Activated CD8-positive, alpha-beta T cell treated with anti-CD3 and anti-CD28 coated beads, Interleukin-2, amount 10 ng/mL, durations not matched to agents 7 days and 5 days (primary cell): ENCODE measurements at regions of chr1 and their contacts with region 1.

Region 1: GRCh38 chr1:168342572-168343280 is 62.0 kb downstream of the TBX19 start:
- DNase-seq: peak; percentile 92
- ATAC-seq: peak; percentile 98
- H3K4me3 Mint-ChIP-seq: no peak overlapping the region
- H3K27ac Mint-ChIP-seq: peak overlapping the region; percentile 77
- H3K4me1 Mint-ChIP-seq: peaks cover 62% of the 10 kb centered on the region
- H3K27me3 Mint-ChIP-seq: no peaks in the 10 kb centered on the region

Region 2: GRCh38 chr1:168187177-168187576 is 155.5 kb before region 1 on chr1:
- CTCF ChIA-PET with region 1: no interaction called
- POLR2A ChIA-PET with region 1: no interaction called
- DNase-seq: no peak
- ATAC-seq: no peak
- H3K4me3 Mint-ChIP-seq: no peak overlapping the region
- H3K27ac Mint-ChIP-seq: no peak overlapping the region
- H3K4me1 Mint-ChIP-seq: peaks cover 5% of the 10 kb centered on the region
- H3K27me3 Mint-ChIP-seq: no peaks in the 10 kb centered on the region

Region 3: GRCh38 chr1:168312718-168313604 is 29.8 kb before region 1 on chr1:
- CTCF ChIA-PET with region 1: interaction called, 17 read pairs
- POLR2A ChIA-PET with region 1: no interaction called
- DNase-seq: no peak
- ATAC-seq: peak; percentile 60
- H3K4me3 Mint-ChIP-seq: no peak overlapping the region
- H3K27ac Mint-ChIP-seq: no peak overlapping the region
- H3K4me1 Mint-ChIP-seq: peaks cover 26% of the 10 kb centered on the region
- H3K27me3 Mint-ChIP-seq: no peaks in the 10 kb centered on the region

Region 4: DNA sequence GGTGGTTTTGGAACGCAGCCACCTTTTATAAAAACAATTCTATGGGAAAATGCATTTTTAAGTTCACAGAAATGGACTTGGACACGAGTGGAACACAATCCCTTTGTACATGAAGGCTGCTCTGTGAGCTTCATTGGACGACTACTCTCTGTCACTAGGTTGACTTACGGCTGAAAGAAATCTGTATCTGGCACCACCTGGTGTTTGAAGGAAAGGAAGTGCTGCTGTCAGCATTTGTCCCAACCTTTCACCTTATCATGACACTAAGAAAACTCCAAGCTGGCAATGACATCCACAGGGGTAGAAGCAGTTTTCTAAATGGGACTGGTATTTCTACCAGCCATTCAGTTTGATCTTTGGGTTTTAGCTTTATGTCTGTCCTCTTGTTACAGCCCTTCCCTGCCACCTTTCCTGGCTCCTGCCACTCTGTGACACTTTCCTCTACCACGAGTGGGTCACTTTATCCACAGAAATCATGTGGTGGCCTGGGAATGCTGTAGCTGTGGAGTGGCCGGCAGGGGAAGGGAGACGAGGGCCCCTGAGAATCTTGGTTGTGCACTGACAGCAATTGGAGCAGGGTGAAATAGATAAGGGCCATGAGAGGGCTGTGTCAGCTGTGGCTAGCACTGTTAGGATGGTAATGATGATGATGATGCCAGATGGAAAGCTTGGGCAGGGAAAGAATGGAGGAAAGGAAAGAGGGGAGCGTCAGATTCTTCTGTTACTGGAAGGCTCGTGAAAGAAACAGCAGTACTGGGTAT is 23.2 kb after region 1 on chr1:
- CTCF ChIA-PET with region 1: interaction called, 280 read pairs
- POLR2A ChIA-PET with region 1: interaction called, 7 read pairs
- DNase-seq: no peak
- ATAC-seq: no peak
- H3K4me3 Mint-ChIP-seq: no peak overlapping the region
- H3K27ac Mint-ChIP-seq: no peak overlapping the region
- H3K4me1 Mint-ChIP-seq: peaks cover 27% of the 10 kb centered on the region
- H3K27me3 Mint-ChIP-seq: peaks cover 15% of the 10 kb centered on the region

Region 5: GRCh38 chr1:168403140-168403539 is 60.4 kb after region 1 on chr1:
- CTCF ChIA-PET with region 1: interaction called, 25 read pairs
- POLR2A ChIA-PET with region 1: no interaction called
- DNase-seq: no peak
- ATAC-seq: no peak
- H3K4me3 Mint-ChIP-seq: no peak overlapping the region
- H3K27ac Mint-ChIP-seq: no peak overlapping the region
- H3K4me1 Mint-ChIP-seq: peaks cover 24% of the 10 kb centered on the region
- H3K27me3 Mint-ChIP-seq: peaks cover 3% of the 10 kb centered on the region

Region 6: GRCh38 chr1:168439456-168440375 is 97.0 kb after region 1 on chr1:
- CTCF ChIA-PET with region 1: interaction called, 258 read pairs
- POLR2A ChIA-PET with region 1: interaction called, 5 read pairs
- DNase-seq: peak; percentile 96
- ATAC-seq: peak; percentile 86
- H3K4me3 Mint-ChIP-seq: peak overlapping the region; percentile 47
- H3K27ac Mint-ChIP-seq: peak overlapping the region; percentile 82
- H3K4me1 Mint-ChIP-seq: peaks cover 65% of the 10 kb centered on the region
- H3K27me3 Mint-ChIP-seq: no peaks in the 10 kb centered on the region

Region 7: GRCh38 chr1:168603501-168604110 is 260.9 kb after region 1 on chr1:
- CTCF ChIA-PET with region 1: interaction called, 51 read pairs
- POLR2A ChIA-PET with region 1: no interaction called
- DNase-seq: peak; percentile 81
- ATAC-seq: peak; percentile 95
- H3K4me3 Mint-ChIP-seq: no peak overlapping the region
- H3K27ac Mint-ChIP-seq: no peak overlapping the region
- H3K4me1 Mint-ChIP-seq: peaks cover 13% of the 10 kb centered on the region
- H3K27me3 Mint-ChIP-seq: peaks cover 6% of the 10 kb centered on the region